ENCODE measurements at regions of chr6 and their contacts with region 1.

Region 1: GRCh38 chr6:128725271-128726233 is 157.4 kb upstream of the LAMA2 start:
- DNase-seq: peak in 1 of 3 donors; percentile 63
- ATAC-seq: no peak
- H3K4me3 ChIP-seq: no peak overlapping the region
- H3K4me1 ChIP-seq: no peaks in the 10 kb centered on the region
- CTCF ChIP-seq: no peak

Region 2: GRCh38 chr6:128889870-128890269 is 164.3 kb after region 1 on chr6:
- intact Hi-C with region 1: no loop called
- DNase-seq: no peak
- ATAC-seq: no peak
- H3K4me3 ChIP-seq: no peak overlapping the region
- H3K4me1 ChIP-seq: no peaks in the 10 kb centered on the region
- CTCF ChIP-seq: no peak

Region 3: DNA sequence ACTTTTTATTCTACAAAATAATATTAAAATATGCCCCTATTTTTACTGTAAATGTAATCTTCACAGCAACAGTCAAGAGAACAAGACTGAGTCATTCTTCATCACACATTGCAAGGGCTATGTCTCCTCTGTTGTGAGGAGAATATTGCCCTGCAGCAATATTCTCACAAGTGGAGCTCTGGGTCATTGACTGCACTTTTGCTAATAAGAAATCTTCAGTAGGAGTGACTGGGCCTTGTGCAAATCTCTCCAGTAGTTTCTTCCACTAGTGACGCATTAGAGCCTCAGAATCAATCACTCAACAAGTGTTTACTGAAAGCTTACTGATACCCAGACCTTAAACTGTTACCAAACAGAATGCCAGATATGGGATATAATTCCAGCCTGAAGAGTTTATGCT is 206.5 kb after region 1 on chr6:
- intact Hi-C with region 1: no loop called
- DNase-seq: no peak
- ATAC-seq: no peak
- H3K4me3 ChIP-seq: no peak overlapping the region
- H3K4me1 ChIP-seq: no peaks in the 10 kb centered on the region
- CTCF ChIP-seq: no peak

Region 4: GRCh38 chr6:128963561-128963960 is 238.0 kb after region 1 on chr6:
- intact Hi-C with region 1: no loop called
- DNase-seq: no peak
- ATAC-seq: no peak
- H3K4me3 ChIP-seq: no peak overlapping the region
- H3K4me1 ChIP-seq: no peaks in the 10 kb centered on the region
- CTCF ChIP-seq: no peak

Region 5: GRCh38 chr6:129251669-129252376 is 526.3 kb after region 1 on chr6:
- intact Hi-C with region 1: loop called in 1 of 2 experiments (anchors 5 kb)
- DNase-seq: peak in 2 of 3 donors; percentile 45 to 95
- ATAC-seq: peak; percentile 94
- H3K4me3 ChIP-seq: no peak overlapping the region
- H3K4me1 ChIP-seq: no peaks in the 10 kb centered on the region
- CTCF ChIP-seq: peak; percentile 74